ENCODE measurements at regions of chr3 and their contacts with region 1.

Region 1: GRCh38 chr3:194592798-194593752 is 40.1 kb downstream of the TMEM44 start:
- DNase-seq: no peak
- H3K4me3 ChIP-seq: no peak overlapping the region
- H3K27ac ChIP-seq: peak overlapping the region in 1 of 4 donors; percentile 61
- H3K4me1 ChIP-seq: peaks cover 0 to 18% (median 10%) of the 10 kb centered on the region in 4 donors
- H3K27me3 ChIP-seq: no peaks in the 10 kb centered on the region
- CTCF ChIP-seq: no peak
- EP300 ChIP-seq: no peak
- POLR2A ChIP-seq: no peak

Region 2: GRCh38 chr3:194333212-194333980 is 259.7 kb before region 1 on chr3:
- intact Hi-C with region 1: loop called (anchors 10 kb)
- DNase-seq: peak; percentile 90
- H3K4me3 ChIP-seq: peak overlapping the region; percentile 11 to 48 (median 39)
- H3K27ac ChIP-seq: no peak overlapping the region
- H3K4me1 ChIP-seq: peaks cover 0 to 21% (median 11%) of the 10 kb centered on the region in 4 donors
- H3K27me3 ChIP-seq: peaks cover 0 to 14% (median 0%) of the 10 kb centered on the region in 3 donors
- CTCF ChIP-seq: peak; percentile 96 to 99 (median 98)
- EP300 ChIP-seq: no peak
- POLR2A ChIP-seq: no peak

Region 3: GRCh38 chr3:194472290-194472920 is 120.7 kb before region 1 on chr3:
- intact Hi-C with region 1: loop called (anchors 1 kb)
- DNase-seq: no peak
- H3K4me3 ChIP-seq: no peak overlapping the region
- H3K27ac ChIP-seq: no peak overlapping the region
- H3K4me1 ChIP-seq: peaks cover 0 to 15% (median 5%) of the 10 kb centered on the region in 4 donors
- H3K27me3 ChIP-seq: no peaks in the 10 kb centered on the region
- CTCF ChIP-seq: peak; percentile 88 to 96 (median 95)
- EP300 ChIP-seq: no peak
- POLR2A ChIP-seq: no peak